GM12878 (cell line): ENCODE measurements at regions of chr1 and their contacts with region 1.

Region 1: GRCh38 chr1:8763888-8764287 is 53.6 kb downstream of the RERE start:
- DNase-seq: peak; percentile 84
- ATAC-seq: peak; percentile 75
- H3K4me3 ChIP-seq: peak overlapping the region; percentile 8; the same call in 1 of the 2 replicates
- H3K27ac ChIP-seq: peak overlapping the region; percentile 93
- H3K4me1 ChIP-seq: peaks cover 29% of the 10 kb centered on the region
- H3K27me3 ChIP-seq: no peaks in the 10 kb centered on the region
- CTCF ChIP-seq: peak; percentile 15 to 31 (median 19); a peak in 3 of 6 replicates
- EP300 ChIP-seq: no peak
- POLR2A ChIP-seq: no peak; the same call in 1 of the 2 replicates
- RAD21 ChIP-seq: no peak

Region 2: DNA sequence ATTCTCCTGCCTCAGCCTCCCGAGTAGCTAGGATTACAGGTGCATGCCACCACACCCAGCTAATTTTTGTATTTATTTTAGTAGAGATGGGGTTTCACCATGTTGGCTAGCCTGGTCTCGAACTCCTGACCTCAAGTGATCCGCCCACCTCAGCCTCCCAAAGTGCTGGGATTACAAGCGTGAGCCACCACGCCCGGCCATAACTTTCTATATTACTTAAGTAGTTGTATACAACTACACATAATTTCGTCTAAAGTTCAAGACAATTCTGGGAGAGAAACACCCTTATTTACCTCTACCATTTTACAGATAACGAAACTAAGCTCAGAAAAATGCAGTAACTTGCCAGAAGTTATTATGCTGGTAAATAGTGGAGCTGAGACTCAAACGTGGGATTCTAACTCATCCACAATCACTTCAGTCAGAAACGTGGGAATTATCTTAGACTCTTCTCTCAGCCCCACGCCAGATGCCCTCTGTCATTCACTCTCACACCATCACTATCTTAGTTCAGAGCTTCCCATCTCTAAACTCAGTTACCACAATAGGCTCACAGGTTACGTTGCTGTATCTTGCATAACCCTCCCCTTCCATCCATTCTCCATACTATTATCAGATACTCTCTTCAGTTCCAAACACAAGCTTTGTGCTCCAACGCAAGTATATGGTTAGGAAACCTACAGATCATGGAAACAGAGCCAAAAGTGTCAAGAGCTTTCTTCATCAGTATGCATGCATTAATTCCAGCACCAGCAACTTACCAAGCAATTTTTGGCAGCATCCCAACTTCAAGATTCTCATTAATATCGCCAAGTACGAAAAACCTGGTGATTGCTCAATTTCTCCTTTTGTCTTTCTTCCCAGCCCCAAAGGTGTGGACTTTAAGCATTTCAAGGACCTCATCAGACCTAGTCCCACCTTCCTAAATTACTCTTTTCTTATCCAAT is 15.7 kb before region 1 on chr1:
- CTCF ChIA-PET with region 1: interaction called, 10 read pairs
- POLR2A ChIA-PET with region 1: interaction called, 8 read pairs
- RAD21 ChIA-PET with region 1: interaction called, 4 read pairs
- SMC1A ChIA-PET with region 1: interaction called, 9 read pairs
- in situ Hi-C with region 1: no loop called
- intact Hi-C with region 1: no loop called
- DNase-seq: no peak
- ATAC-seq: no peak
- H3K4me3 ChIP-seq: no peak overlapping the region
- H3K27ac ChIP-seq: no peak overlapping the region
- H3K4me1 ChIP-seq: peaks cover 6% of the 10 kb centered on the region
- H3K27me3 ChIP-seq: no peaks in the 10 kb centered on the region
- CTCF ChIP-seq: no peak
- EP300 ChIP-seq: no peak
- POLR2A ChIP-seq: no peak
- RAD21 ChIP-seq: no peak

Region 3: GRCh38 chr1:8817406-8818324 is 53.8 kb after region 1 on chr1 and contains the start of gene RERE:
- CTCF ChIA-PET with region 1: interaction called, 15 read pairs
- POLR2A ChIA-PET with region 1: interaction called, 27 read pairs
- RAD21 ChIA-PET with region 1: interaction called, 9 read pairs
- SMC1A ChIA-PET with region 1: interaction called, 19 read pairs
- in situ Hi-C with region 1: no loop called
- intact Hi-C with region 1: loop called (anchors 5 kb)
- DNase-seq: peak; percentile 74
- ATAC-seq: peak; percentile 92
- H3K4me3 ChIP-seq: peak within 1 kb of the TSS; percentile 91
- H3K27ac ChIP-seq: peak within 1 kb of the TSS; percentile 95
- H3K4me1 ChIP-seq: no peaks in the 10 kb centered on the region
- H3K27me3 ChIP-seq: no peaks in the 10 kb centered on the region
- CTCF ChIP-seq: 0 out of 6 replicates have a peak, but pooled peaks of 1 of the 3 experiments have one; percentile 0
- EP300 ChIP-seq: no peak
- POLR2A ChIP-seq: peak; percentile 92
- RAD21 ChIP-seq: no peak
- polyA plus RNA-seq, gene RERE: 5.2 to 5.9 TPM

Region 4: GRCh38 chr1:8985915-8986813 is 222.3 kb after region 1 on chr1:
- CTCF ChIA-PET with region 1: no interaction called
- POLR2A ChIA-PET with region 1: no interaction called
- RAD21 ChIA-PET with region 1: no interaction called
- SMC1A ChIA-PET with region 1: no interaction called
- in situ Hi-C with region 1: no loop called
- intact Hi-C with region 1: no loop called
- DNase-seq: no peak
- ATAC-seq: no peak
- H3K4me3 ChIP-seq: no peak overlapping the region
- H3K27ac ChIP-seq: no peak overlapping the region
- H3K4me1 ChIP-seq: no peaks in the 10 kb centered on the region
- H3K27me3 ChIP-seq: no peaks in the 10 kb centered on the region
- CTCF ChIP-seq: no peak
- EP300 ChIP-seq: no peak
- POLR2A ChIP-seq: no peak
- RAD21 ChIP-seq: no peak